CD8-positive, alpha-beta T cell (primary cell): ENCODE measurements at regions of chr2 and their contacts with region 1.

Region 1: GRCh38 chr2:54579684-54580620 is 123.8 kb downstream of the SPTBN1 start:
- DNase-seq: peak in 6 of 9 experiments; percentile 30 to 87 (median 58)
- ATAC-seq: peak; percentile 70
- H3K4me3 ChIP-seq: peak overlapping the region; percentile 1 to 23
- H3K4me3 Mint-ChIP-seq: peak overlapping the region; percentile 75
- H3K27ac ChIP-seq: peak overlapping the region; percentile 55 to 94
- H3K27ac Mint-ChIP-seq: peak overlapping the region; percentile 95
- H3K4me1 ChIP-seq: peaks cover 96% of the 10 kb centered on the region
- H3K4me1 Mint-ChIP-seq: peaks cover 95% of the 10 kb centered on the region
- H3K27me3 ChIP-seq: no peaks in the 10 kb centered on the region
- H3K27me3 Mint-ChIP-seq: no peaks in the 10 kb centered on the region
- CTCF ChIP-seq: no peak

Region 2: DNA sequence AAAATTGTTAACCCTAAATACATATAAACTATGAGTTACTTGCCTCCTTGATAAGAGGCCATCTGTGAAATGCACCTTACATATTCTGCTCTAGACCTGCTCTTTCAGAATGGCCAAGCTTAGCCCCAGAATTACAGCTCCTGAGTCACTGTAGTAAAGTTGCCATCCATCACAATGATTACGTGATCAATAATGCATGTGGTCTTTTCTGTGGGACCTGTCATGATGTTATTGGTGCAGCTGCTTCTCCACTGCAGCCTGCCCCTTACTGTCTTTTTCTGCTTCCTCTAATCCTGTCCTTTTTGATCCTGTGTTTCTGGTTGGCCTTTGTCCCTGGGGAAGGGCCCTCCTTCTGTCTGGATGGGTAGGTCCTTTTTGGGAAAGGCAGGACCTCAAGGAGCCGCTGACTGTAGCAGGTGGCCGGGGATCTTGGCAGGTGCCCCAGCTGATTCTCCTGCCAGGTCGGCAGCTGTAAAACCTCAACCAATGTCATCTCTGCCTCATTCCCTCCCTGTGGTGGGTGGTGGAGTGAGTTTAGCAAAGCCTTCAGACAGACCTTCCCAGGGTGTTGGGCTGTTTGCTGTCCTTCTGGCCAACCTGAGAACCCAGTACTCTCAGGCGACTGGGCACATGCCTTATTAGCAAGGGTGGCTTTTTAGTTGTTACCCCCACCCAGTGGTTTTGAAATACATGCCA is 17.3 kb after region 1 on chr2:
- CTCF ChIA-PET with region 1: interaction called, 11 read pairs
- POLR2A ChIA-PET with region 1: interaction called, 6 read pairs
- intact Hi-C with region 1: loop called (anchors 1 to 2 kb)
- DNase-seq: peak in 3 of 9 experiments; percentile 29 to 61 (median 37)
- ATAC-seq: peak; percentile 27
- H3K4me3 ChIP-seq: peak overlapping the region in 1 of 2 experiments; percentile 7
- H3K4me3 Mint-ChIP-seq: peak overlapping the region; percentile 80
- H3K27ac ChIP-seq: peak overlapping the region; percentile 35 to 71
- H3K27ac Mint-ChIP-seq: peak overlapping the region; percentile 95
- H3K4me1 ChIP-seq: peaks cover 89% of the 10 kb centered on the region
- H3K4me1 Mint-ChIP-seq: peaks cover 94% of the 10 kb centered on the region
- H3K27me3 ChIP-seq: no peaks in the 10 kb centered on the region
- H3K27me3 Mint-ChIP-seq: no peaks in the 10 kb centered on the region
- CTCF ChIP-seq: no peak

Region 3: DNA sequence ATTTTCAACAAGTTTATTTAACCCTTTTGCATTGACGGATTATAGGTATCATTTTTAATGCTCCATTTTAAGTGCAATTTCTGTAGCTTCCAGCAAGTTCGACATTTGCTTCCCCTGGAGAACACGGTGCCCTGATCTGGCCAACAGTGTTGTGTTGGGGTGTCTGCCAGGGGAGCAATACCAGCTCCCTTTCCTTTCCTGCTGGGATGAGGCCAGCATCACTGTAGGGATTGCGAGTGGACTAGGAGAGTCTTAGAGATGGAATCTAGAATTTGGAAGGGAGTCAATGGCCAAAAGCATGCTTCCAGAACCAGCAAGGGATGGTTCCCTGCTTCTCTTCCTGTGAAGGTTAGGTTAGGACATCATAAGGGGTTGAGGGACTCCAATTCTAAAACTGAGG is 335.1 kb after region 1 on chr2:
- CTCF ChIA-PET with region 1: no interaction called
- POLR2A ChIA-PET with region 1: no interaction called
- intact Hi-C with region 1: no loop called
- DNase-seq: no peak
- ATAC-seq: no peak
- H3K4me3 ChIP-seq: no peak overlapping the region
- H3K4me3 Mint-ChIP-seq: no peak overlapping the region
- H3K27ac ChIP-seq: no peak overlapping the region
- H3K27ac Mint-ChIP-seq: no peak overlapping the region
- H3K4me1 ChIP-seq: no peaks in the 10 kb centered on the region
- H3K4me1 Mint-ChIP-seq: no peaks in the 10 kb centered on the region
- H3K27me3 ChIP-seq: no peaks in the 10 kb centered on the region
- H3K27me3 Mint-ChIP-seq: peaks cover 3% of the 10 kb centered on the region
- CTCF ChIP-seq: no peak